Naive thymus-derived CD4-positive, alpha-beta T cell (primary cell): ENCODE measurements at regions of chr6 and their contacts with region 1.

Region 1: DNA sequence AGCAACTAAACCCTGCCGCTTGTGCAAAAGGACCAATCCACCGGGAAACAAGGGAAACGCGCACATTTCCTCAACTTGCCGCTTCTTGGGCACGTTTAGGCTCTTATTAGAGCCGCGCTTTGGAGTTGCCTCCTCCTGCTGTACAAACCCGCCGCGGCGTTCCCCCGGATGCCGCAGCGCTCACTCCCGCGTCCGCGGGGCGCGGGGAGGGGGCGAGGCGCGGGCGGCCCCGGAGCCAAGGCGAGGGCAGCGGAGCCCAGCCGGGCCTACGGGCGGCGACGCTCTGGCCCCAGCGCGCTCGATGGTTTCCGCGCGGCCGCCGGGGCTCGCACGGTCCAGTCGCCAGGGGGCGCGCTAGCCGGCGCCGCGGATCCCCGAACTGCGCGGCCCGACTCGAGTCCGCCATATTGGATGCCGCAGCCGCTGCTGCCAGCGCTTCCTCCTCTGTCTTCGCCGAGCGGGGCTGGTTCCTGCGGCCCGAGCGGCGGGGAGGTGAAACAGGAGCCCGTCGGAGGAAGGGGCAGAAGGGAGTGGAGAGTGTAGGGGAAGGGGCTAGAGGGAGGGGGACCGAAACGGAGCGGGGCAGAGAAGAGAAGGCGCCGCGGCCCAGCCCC is at the start of gene SCAF8:
- DNase-seq: peak; percentile 72 to 96 (median 90)
- ATAC-seq: peak; percentile 88
- H3K4me3 ChIP-seq: peak within 1 kb of the TSS; percentile 81
- H3K4me3 Mint-ChIP-seq: peak within 1 kb of the TSS; percentile 89 to 98 (median 92)
- H3K27ac ChIP-seq: peak within 1 kb of the TSS; percentile 93
- H3K27ac Mint-ChIP-seq: peak within 1 kb of the TSS; percentile 85 to 99 (median 93)
- H3K4me1 ChIP-seq: peaks cover 26 to 36% of the 10 kb centered on the region in 2 donors
- H3K4me1 Mint-ChIP-seq: peaks cover 20 to 49% (median 44%) of the 10 kb centered on the region in 7 donors
- H3K27me3 ChIP-seq: no peaks in the 10 kb centered on the region
- H3K27me3 Mint-ChIP-seq: no peaks in the 10 kb centered on the region
- total RNA-seq, gene SCAF8: 41.1 to 69.2 (median 54.9) TPM

Region 2: DNA sequence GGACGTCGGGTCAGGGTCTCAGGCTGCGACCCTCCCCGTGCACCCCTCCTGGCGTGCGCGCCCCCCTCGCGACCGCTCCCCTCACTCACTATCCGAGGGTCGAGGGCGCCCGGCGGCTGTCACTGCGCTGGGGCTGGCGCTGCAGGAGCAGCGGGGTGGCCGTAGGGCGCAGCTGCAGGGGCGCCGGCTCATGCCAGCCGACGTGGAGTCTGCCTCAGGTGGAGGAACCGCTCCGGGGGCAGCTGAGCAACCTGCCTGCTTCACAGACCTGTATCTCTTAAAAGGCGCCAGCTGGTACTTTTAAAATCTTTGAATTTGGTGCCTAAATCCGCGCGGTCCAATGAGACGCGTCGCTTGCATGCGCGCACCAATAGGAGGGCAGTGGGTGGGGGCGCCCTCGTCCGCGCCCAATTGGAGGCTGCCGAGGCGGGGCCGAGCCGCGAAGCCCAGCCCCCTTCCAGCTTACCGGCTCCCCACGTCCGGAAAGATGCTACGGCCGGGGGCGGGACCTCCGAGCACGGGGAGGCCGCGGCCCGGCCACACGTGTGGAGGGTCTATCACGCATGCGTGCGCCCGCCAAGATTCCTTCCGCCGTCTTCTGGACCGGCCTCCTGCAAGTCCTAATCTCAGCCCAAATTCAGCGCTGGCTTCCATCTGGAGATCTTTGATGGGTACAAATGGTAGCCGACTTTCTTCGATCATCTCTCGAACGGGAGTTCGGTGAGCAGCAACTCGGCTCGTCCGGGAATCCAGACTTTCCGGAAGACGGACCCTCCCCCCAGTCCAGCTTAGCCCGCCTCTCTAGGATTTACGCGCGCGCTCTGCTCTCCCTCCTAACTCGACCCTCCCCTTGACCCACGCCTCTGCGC is 1750.1 kb before region 1 on chr6 and contains the start of gene FBXO5:
- CTCF ChIA-PET with region 1: no interaction called
- POLR2A ChIA-PET with region 1: no interaction called
- intact Hi-C with region 1: loop called (anchors 2 to 5 kb)
- DNase-seq: peak; percentile 94 to 98 (median 96)
- ATAC-seq: peak; percentile 97
- H3K4me3 ChIP-seq: peak within 1 kb of the TSS; percentile 94
- H3K4me3 Mint-ChIP-seq: peak within 1 kb of the TSS; percentile 92 to 100 (median 96)
- H3K27ac ChIP-seq: peak within 1 kb of the TSS; percentile 89
- H3K27ac Mint-ChIP-seq: peak within 1 kb of the TSS; percentile 87 to 99 (median 95)
- H3K4me1 ChIP-seq: peaks cover 10 to 20% of the 10 kb centered on the region in 2 donors
- H3K4me1 Mint-ChIP-seq: peaks cover 33 to 58% (median 43%) of the 10 kb centered on the region in 7 donors
- H3K27me3 ChIP-seq: no peaks in the 10 kb centered on the region
- H3K27me3 Mint-ChIP-seq: no peaks in the 10 kb centered on the region
- total RNA-seq, gene FBXO5: 3.2 to 50.2 (median 9.2) TPM

Region 3: DNA sequence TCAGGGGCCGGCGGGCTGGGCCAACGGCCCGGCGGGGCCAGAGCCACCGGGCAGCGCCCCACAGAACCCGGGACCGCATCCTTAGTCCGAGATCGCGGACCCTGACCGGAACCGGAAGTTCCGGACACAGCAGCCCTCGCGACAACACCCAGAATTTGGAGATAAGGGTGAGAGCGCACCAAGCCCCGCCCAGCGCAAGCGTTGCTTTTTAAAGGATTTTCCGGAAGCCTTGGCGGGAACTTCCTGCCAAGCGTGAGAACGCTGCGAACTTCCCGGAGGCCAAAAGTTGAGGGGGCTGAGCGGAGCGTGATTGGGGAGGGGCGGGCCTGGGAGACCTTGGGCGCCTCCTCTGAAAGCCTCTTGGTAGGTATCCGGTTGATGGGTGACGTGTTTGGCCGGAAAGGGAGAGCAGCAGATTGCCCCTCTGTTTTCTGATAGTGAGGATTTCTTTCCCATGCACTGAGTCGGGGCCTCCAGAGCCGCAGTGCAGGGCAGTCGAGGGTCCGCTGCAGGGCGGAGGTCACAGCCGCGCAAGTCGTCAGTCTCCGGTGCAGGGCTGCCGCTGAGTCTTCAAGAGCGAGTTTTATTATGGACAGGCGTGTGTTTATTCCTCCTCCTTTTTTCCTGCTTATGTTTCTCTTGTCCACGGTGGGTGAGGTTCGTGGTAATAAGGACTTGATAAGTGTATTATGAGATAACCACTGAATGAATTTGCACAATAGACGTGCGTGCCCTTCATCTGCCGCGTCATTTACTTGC is 1730.3 kb before region 1 on chr6 and contains the start of gene MTRF1L:
- CTCF ChIA-PET with region 1: no interaction called
- POLR2A ChIA-PET with region 1: no interaction called
- intact Hi-C with region 1: loop called (anchors 2 to 5 kb)
- DNase-seq: peak; percentile 52 to 84 (median 70)
- ATAC-seq: peak; percentile 92
- H3K4me3 ChIP-seq: peak within 1 kb of the TSS; percentile 63
- H3K4me3 Mint-ChIP-seq: peak within 1 kb of the TSS; percentile 85 to 99 (median 96)
- H3K27ac ChIP-seq: peak within 1 kb of the TSS; percentile 73
- H3K27ac Mint-ChIP-seq: peak within 1 kb of the TSS; percentile 86 to 98 (median 93)
- H3K4me1 ChIP-seq: peaks cover 18% of the 10 kb centered on the region in 2 donors
- H3K4me1 Mint-ChIP-seq: peaks cover 24 to 59% (median 49%) of the 10 kb centered on the region in 7 donors
- H3K27me3 ChIP-seq: no peaks in the 10 kb centered on the region
- H3K27me3 Mint-ChIP-seq: peaks cover 0 to 18% (median 0%) of the 10 kb centered on the region in 5 donors
- total RNA-seq, gene MTRF1L: 8.9 to 18.1 (median 13.5) TPM

Region 4: GRCh38 chr6:154632119-154632518 is 101.0 kb before region 1 on chr6:
- CTCF ChIA-PET with region 1: no interaction called
- POLR2A ChIA-PET with region 1: no interaction called
- intact Hi-C with region 1: no loop called
- DNase-seq: no peak
- ATAC-seq: no peak
- H3K4me3 ChIP-seq: no peak overlapping the region
- H3K4me3 Mint-ChIP-seq: no peak overlapping the region
- H3K27ac ChIP-seq: no peak overlapping the region
- H3K27ac Mint-ChIP-seq: no peak overlapping the region
- H3K4me1 ChIP-seq: no peaks in the 10 kb centered on the region
- H3K4me1 Mint-ChIP-seq: no peaks in the 10 kb centered on the region
- H3K27me3 ChIP-seq: no peaks in the 10 kb centered on the region
- H3K27me3 Mint-ChIP-seq: peaks cover 0 to 24% (median 13%) of the 10 kb centered on the region in 5 donors

Region 5: GRCh38 chr6:154805288-154805911 is 72.3 kb after region 1 on chr6:
- CTCF ChIA-PET with region 1: interaction called, 3 read pairs
- POLR2A ChIA-PET with region 1: interaction called, 4 read pairs
- intact Hi-C with region 1: loop called (anchors 1 kb)
- DNase-seq: peak in 7 of 9 donors; percentile 16 to 59 (median 44)
- ATAC-seq: peak; percentile 80
- H3K4me3 ChIP-seq: no peak overlapping the region
- H3K4me3 Mint-ChIP-seq: no peak overlapping the region
- H3K27ac ChIP-seq: no peak overlapping the region
- H3K27ac Mint-ChIP-seq: peak overlapping the region in 3 of 9 donors; percentile 26 to 66 (median 48)
- H3K4me1 ChIP-seq: no peaks in the 10 kb centered on the region
- H3K4me1 Mint-ChIP-seq: peaks cover 1 to 8% (median 5%) of the 10 kb centered on the region in 7 donors
- H3K27me3 ChIP-seq: no peaks in the 10 kb centered on the region
- H3K27me3 Mint-ChIP-seq: no peaks in the 10 kb centered on the region

Region 6: GRCh38 chr6:155154158-155154830 is 421.2 kb after region 1 on chr6:
- CTCF ChIA-PET with region 1: no interaction called
- POLR2A ChIA-PET with region 1: no interaction called
- intact Hi-C with region 1: loop called in 1 of 2 experiments (anchors 5 kb)
- DNase-seq: peak in 1 of 9 donors; percentile 56
- ATAC-seq: no peak
- H3K4me3 ChIP-seq: no peak overlapping the region
- H3K4me3 Mint-ChIP-seq: peak overlapping the region in 1 of 10 donors; percentile 63
- H3K27ac ChIP-seq: no peak overlapping the region
- H3K27ac Mint-ChIP-seq: peak overlapping the region in 1 of 9 donors; percentile 95
- H3K4me1 ChIP-seq: peaks cover 5 to 12% of the 10 kb centered on the region in 2 donors
- H3K4me1 Mint-ChIP-seq: peaks cover 0 to 72% (median 14%) of the 10 kb centered on the region in 7 donors
- H3K27me3 ChIP-seq: no peaks in the 10 kb centered on the region
- H3K27me3 Mint-ChIP-seq: peaks cover 0 to 8% (median 4%) of the 10 kb centered on the region in 5 donors

Region 7: DNA sequence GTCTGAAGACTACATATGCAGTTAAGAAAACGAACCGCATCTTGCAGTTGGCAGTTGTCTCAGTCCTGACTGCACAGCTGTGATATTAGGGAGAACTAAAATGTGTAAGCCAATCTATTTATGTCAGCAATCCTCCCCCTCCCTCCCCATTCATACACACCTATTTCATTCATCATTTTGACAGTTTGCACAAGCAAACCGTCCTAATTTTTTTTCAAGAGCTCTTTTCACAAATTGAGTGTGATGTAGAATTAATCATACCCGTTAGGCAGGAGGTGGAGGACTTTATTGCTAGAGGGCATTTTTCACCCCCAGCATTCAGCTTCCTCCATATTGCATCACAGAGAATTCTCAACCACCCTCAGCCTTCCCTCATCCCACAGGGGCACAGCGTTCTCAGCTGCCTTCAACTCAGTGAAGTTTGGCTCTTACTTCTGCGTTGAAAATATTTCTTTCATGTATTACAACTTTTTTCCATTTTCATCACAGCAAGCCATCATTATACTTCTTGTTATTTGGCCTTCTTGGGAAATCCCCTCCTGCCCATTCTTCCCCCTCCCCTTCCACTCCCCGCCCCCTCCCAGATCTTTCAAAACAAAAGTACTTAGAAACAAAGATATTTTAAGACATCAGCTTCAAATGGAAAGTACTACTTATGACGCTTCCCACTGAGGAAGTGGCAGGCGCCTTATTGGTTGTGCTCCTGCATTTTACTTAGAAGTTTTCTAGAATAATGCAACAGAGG is 685.1 kb after region 1 on chr6:
- CTCF ChIA-PET with region 1: no interaction called
- POLR2A ChIA-PET with region 1: no interaction called
- intact Hi-C with region 1: loop called (anchors 1 to 5 kb)
- DNase-seq: peak; percentile 9 to 87 (median 68)
- ATAC-seq: peak; percentile 89
- H3K4me3 ChIP-seq: peak overlapping the region; percentile 44
- H3K4me3 Mint-ChIP-seq: peak overlapping the region; percentile 77 to 89 (median 84)
- H3K27ac ChIP-seq: peak overlapping the region; percentile 84
- H3K27ac Mint-ChIP-seq: peak overlapping the region; percentile 93 to 99 (median 97)
- H3K4me1 ChIP-seq: peaks cover 6 to 15% of the 10 kb centered on the region in 2 donors
- H3K4me1 Mint-ChIP-seq: peaks cover 22 to 50% (median 38%) of the 10 kb centered on the region in 7 donors
- H3K27me3 ChIP-seq: no peaks in the 10 kb centered on the region
- H3K27me3 Mint-ChIP-seq: no peaks in the 10 kb centered on the region